Common myeloid progenitor, CD34-positive (primary cell): ENCODE measurements at regions of chr7 and their contacts with region 1.

Region 1: GRCh38 chr7:27921081-27921836 is 181.3 kb downstream of the TAX1BP1 start:
- DNase-seq: peak; percentile 87 to 92 (median 87)
- H3K4me3 ChIP-seq: peak overlapping the region in 1 of 7 experiments; percentile 30
- H3K27ac ChIP-seq: no peak overlapping the region
- H3K4me1 ChIP-seq: peaks cover 4 to 8% (median 6%) of the 10 kb centered on the region in 4 experiments
- H3K27me3 ChIP-seq: peaks cover 0 to 2% (median 0%) of the 10 kb centered on the region in 5 experiments

Region 2: GRCh38 chr7:27210441-27211083 is 710.7 kb before region 1 on chr7:
- CTCF ChIA-PET with region 1: interaction called, 19 read pairs
- POLR2A ChIA-PET with region 1: no interaction called
- DNase-seq: peak in 2 of 3 donors; percentile 64 to 67
- H3K4me3 ChIP-seq: peak overlapping the region in 3 of 7 experiments; percentile 27 to 44 (median 44)
- H3K27ac ChIP-seq: no peak overlapping the region
- H3K4me1 ChIP-seq: peaks cover 0 to 15% (median 12%) of the 10 kb centered on the region in 4 experiments
- H3K27me3 ChIP-seq: peaks cover 26 to 100% (median 73%) of the 10 kb centered on the region in 5 experiments

Region 3: GRCh38 chr7:27910326-27910725 is 10.9 kb before region 1 on chr7:
- CTCF ChIA-PET with region 1: interaction called, 15 read pairs
- POLR2A ChIA-PET with region 1: no interaction called
- DNase-seq: no peak
- H3K4me3 ChIP-seq: no peak overlapping the region
- H3K27ac ChIP-seq: no peak overlapping the region
- H3K4me1 ChIP-seq: no peaks in the 10 kb centered on the region
- H3K27me3 ChIP-seq: no peaks in the 10 kb centered on the region